Posterior vena cava (tissue), 2 donors: ENCODE measurements at regions of chr1 and their contacts with region 1.

Region 1: GRCh38 chr1:186519982-186520381 is 59.1 kb upstream of the PDC start:
- DNase-seq: no peak

Region 2: DNA sequence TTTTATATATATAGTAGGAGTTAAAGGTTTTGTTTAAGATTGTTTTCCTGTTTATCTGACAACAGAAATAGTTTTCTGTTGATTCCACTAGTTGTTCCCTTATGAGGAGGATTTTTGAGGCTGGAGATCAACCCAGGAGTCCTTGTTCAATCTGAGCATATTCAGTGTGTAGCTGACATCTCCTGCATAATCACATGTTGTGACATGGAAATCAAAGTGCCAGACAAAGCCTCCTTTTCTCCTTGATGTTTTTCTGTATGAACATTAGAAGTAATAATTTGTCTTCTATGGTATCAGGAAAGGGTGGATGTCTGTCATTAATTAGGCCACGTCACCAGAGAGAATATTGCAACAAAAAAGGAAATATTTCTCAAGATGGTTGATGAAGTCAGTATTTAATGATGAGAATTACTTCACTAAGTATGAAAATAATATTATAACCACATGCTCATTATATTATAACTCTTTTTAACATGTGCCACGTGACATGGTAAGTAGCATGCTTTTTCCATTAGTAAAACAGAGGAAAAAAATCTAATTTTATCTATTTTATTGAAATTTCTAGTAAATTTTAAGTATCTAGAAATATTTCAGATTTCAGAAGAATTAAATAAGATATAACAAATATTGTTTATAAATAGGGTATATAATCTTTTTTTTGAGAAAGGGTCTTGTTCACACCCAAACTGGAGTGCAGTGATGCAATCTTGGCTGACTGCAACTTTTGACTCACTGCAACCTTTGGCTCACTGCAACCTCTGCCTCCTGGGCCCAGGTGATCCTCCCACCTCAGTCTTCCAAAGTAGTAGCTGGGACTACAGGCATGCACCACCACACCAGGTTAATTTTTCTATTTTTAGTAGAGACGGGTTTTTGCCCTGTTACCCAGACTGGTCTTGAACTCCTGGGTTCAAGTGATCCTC is 562.3 kb before region 1 on chr1:
- intact Hi-C with region 1: loop called in 1 of 2 experiments (anchors 10 kb)
- DNase-seq: no peak